ENCODE measurements at regions of chr4 and their contacts with region 1.

Region 1: GRCh38 chr4:128863312-128864075 is 54.0 kb downstream of the JADE1 start:
- DNase-seq: peak; percentile 62 to 78 (median 77)
- ATAC-seq: peak; percentile 84
- H3K4me3 ChIP-seq: no peak overlapping the region
- H3K4me1 ChIP-seq: peaks cover 8% of the 10 kb centered on the region
- CTCF ChIP-seq: peak; percentile 66

Region 2: DNA sequence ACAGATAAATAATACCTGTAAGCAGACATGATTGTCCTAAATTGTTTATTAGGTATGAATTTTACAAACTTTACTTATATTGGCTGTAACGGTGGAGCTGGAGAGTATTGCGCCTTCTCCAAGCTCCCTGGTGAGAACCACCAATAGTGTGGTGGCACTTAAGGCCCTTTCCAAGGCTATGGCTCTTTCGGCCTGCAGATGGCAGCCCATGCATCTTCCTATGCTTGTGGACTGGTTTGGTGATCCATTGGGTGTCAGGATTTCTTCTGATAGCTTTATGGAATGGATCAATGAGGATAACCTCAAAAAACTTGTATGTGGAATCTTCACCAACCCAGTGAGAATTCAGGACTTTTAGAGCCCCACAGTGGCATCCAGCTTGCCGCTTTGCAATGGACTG is 794.6 kb before region 1 on chr4:
- intact Hi-C with region 1: no loop called
- DNase-seq: no peak
- ATAC-seq: peak; percentile 48
- H3K4me3 ChIP-seq: no peak overlapping the region
- H3K4me1 ChIP-seq: no peaks in the 10 kb centered on the region
- CTCF ChIP-seq: no peak

Region 3: GRCh38 chr4:128191115-128191781 is 672.2 kb before region 1 on chr4:
- intact Hi-C with region 1: loop called (anchors 10 kb)
- DNase-seq: peak in 2 of 3 donors; percentile 36 to 76
- ATAC-seq: peak; percentile 90
- H3K4me3 ChIP-seq: no peak overlapping the region
- H3K4me1 ChIP-seq: no peaks in the 10 kb centered on the region
- CTCF ChIP-seq: peak; percentile 63

Region 4: GRCh38 chr4:128565565-128566186 is 297.8 kb before region 1 on chr4:
- intact Hi-C with region 1: loop called in 1 of 2 experiments (anchors 5 kb)
- DNase-seq: peak in 2 of 3 donors; percentile 65 to 72
- ATAC-seq: peak; percentile 55
- H3K4me3 ChIP-seq: no peak overlapping the region
- H3K4me1 ChIP-seq: no peaks in the 10 kb centered on the region
- CTCF ChIP-seq: no peak

Region 5: GRCh38 chr4:129394635-129395034 is 531.1 kb after region 1 on chr4:
- intact Hi-C with region 1: no loop called
- DNase-seq: no peak
- ATAC-seq: no peak
- H3K4me3 ChIP-seq: no peak overlapping the region
- H3K4me1 ChIP-seq: no peaks in the 10 kb centered on the region
- CTCF ChIP-seq: no peak

Measured in mucosa of descending colon (tissue), 3 donors.